Activated naive CD4-positive, alpha-beta T cell treated with anti-CD3 and anti-CD28 coated beads, Interleukin-2, amount 10 ng/mL, durations not matched to agents 7 days and 5 days (primary cell): ENCODE measurements at regions of chr14 and their contacts with region 1.

Region 1: GRCh38 chr14:91996948-91997371 is 42.9 kb downstream of the TRIP11 start:
- DNase-seq: no peak
- H3K4me3 Mint-ChIP-seq: no peak overlapping the region
- H3K27ac Mint-ChIP-seq: no peak overlapping the region
- H3K4me1 Mint-ChIP-seq: peaks cover 36% of the 10 kb centered on the region
- H3K27me3 Mint-ChIP-seq: no peaks in the 10 kb centered on the region

Region 2: DNA sequence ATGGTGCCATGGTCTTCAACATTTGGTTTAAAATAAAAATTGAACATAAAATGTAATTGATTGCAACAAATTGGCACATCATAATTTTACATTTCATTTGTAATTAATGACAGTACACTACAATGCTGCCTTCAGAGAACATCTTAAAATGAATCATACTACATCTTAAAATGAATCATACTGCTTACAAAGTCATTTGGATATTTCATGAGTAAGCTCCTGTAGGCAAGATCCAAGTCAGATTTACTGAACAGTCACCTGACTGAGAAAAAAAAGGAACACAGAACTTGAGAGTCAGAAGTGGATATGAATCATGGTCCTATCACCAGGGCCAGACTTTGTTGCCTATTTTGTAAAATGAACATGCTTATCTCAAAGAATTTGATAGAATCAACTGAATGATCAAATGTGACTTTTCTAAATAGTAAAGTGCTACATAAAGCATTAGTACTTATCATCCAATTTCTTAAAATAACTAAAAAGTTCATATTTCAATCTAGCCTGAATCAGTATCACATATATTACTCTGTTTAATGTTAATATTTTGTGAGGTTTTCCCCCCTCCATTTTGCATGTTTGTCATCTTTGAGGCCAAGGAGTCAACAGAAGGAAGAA is 16.7 kb before region 1 on chr14:
- CTCF ChIA-PET with region 1: interaction called, 18 read pairs
- DNase-seq: no peak
- H3K4me3 Mint-ChIP-seq: no peak overlapping the region
- H3K27ac Mint-ChIP-seq: peak overlapping the region; percentile 50
- H3K4me1 Mint-ChIP-seq: peaks cover 14% of the 10 kb centered on the region
- H3K27me3 Mint-ChIP-seq: no peaks in the 10 kb centered on the region

Region 3: GRCh38 chr14:91985521-91986255 is 11.3 kb before region 1 on chr14:
- CTCF ChIA-PET with region 1: interaction called, 18 read pairs
- DNase-seq: no peak
- H3K4me3 Mint-ChIP-seq: no peak overlapping the region
- H3K27ac Mint-ChIP-seq: no peak overlapping the region
- H3K4me1 Mint-ChIP-seq: no peaks in the 10 kb centered on the region
- H3K27me3 Mint-ChIP-seq: no peaks in the 10 kb centered on the region

Region 4: GRCh38 chr14:92012121-92012748 is 15.3 kb after region 1 on chr14:
- CTCF ChIA-PET with region 1: interaction called, 12 read pairs
- DNase-seq: no peak
- H3K4me3 Mint-ChIP-seq: no peak overlapping the region
- H3K27ac Mint-ChIP-seq: no peak overlapping the region
- H3K4me1 Mint-ChIP-seq: peaks cover 9% of the 10 kb centered on the region
- H3K27me3 Mint-ChIP-seq: no peaks in the 10 kb centered on the region